Activated CD8-positive, alpha-beta T cell treated with anti-CD3 and anti-CD28 coated beads for 36 hours (primary cell): ENCODE measurements at regions of chr16 and their contacts with region 1.

Region 1: DNA sequence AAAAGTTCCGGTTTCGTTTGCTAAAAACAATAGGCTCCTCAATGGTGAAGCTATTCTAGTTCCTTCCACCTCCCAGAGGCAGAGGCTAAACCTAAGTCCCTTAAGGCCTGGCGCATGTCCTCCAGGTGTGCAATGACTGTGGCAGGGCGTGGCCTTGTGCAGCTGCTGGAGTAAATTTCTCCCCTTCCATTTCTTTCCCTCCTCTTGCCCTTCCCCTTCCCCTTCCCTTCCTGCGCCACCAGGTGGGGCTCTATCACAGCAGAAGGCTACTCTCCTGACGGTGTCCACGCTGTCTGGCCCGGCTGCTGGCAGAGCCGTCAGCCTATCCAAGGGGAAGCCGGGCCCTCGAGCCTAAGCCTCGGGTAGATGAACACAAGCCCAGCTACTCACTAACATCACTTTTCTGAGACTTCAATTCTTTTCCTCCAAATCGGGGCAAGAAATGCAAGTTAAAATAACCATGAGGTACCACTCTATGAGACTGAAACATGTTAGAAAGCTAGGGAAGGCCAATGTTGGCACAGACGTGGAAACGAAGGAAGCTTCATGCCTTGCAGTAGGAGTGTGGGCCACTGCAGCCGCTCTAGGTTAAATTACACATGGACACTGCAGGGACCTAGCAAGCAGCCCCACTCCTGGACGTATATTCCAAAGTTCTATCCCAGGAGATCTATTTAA is 34.4 kb downstream of the C16orf78 start:
- DNase-seq: peak; percentile 80
- ATAC-seq: peak; percentile 96
- H3K4me3 Mint-ChIP-seq: no peak overlapping the region
- H3K27ac Mint-ChIP-seq: no peak overlapping the region
- H3K4me1 Mint-ChIP-seq: peaks cover 3% of the 10 kb centered on the region
- H3K27me3 Mint-ChIP-seq: peaks cover 8% of the 10 kb centered on the region
- CTCF ChIP-seq: peak; percentile 86

Region 2: GRCh38 chr16:49491771-49492761 is 84.1 kb after region 1 on chr16:
- CTCF ChIA-PET with region 1: no interaction called
- POLR2A ChIA-PET with region 1: no interaction called
- intact Hi-C with region 1: loop called (anchors 5 kb)
- DNase-seq: peak; percentile 34
- ATAC-seq: peak; percentile 86
- H3K4me3 Mint-ChIP-seq: no peak overlapping the region
- H3K27ac Mint-ChIP-seq: no peak overlapping the region
- H3K4me1 Mint-ChIP-seq: no peaks in the 10 kb centered on the region
- H3K27me3 Mint-ChIP-seq: no peaks in the 10 kb centered on the region
- CTCF ChIP-seq: peak; percentile 90